SK-N-SH (cell line): ENCODE measurements at regions of chr3 and their contacts with region 1.

Region 1: GRCh38 chr3:172666873-172667694 is 43.8 kb downstream of the NCEH1 start:
- DNase-seq: peak; percentile 62
- H3K4me3 ChIP-seq: no peak overlapping the region
- H3K27ac ChIP-seq: no peak overlapping the region
- H3K4me1 ChIP-seq: no peaks in the 10 kb centered on the region
- H3K27me3 ChIP-seq: no peaks in the 10 kb centered on the region
- CTCF ChIP-seq: peak; percentile 82
- EP300 ChIP-seq: no peak
- RAD21 ChIP-seq: peak; percentile 93

Region 2: GRCh38 chr3:172501560-172501959 is 165.5 kb before region 1 on chr3:
- CTCF ChIA-PET with region 1: interaction called, 10 read pairs
- POLR2A ChIA-PET with region 1: no interaction called
- DNase-seq: no peak
- H3K4me3 ChIP-seq: no peak overlapping the region
- H3K27ac ChIP-seq: no peak overlapping the region
- H3K4me1 ChIP-seq: no peaks in the 10 kb centered on the region
- H3K27me3 ChIP-seq: no peaks in the 10 kb centered on the region
- CTCF ChIP-seq: no peak
- EP300 ChIP-seq: no peak
- RAD21 ChIP-seq: no peak

Region 3: DNA sequence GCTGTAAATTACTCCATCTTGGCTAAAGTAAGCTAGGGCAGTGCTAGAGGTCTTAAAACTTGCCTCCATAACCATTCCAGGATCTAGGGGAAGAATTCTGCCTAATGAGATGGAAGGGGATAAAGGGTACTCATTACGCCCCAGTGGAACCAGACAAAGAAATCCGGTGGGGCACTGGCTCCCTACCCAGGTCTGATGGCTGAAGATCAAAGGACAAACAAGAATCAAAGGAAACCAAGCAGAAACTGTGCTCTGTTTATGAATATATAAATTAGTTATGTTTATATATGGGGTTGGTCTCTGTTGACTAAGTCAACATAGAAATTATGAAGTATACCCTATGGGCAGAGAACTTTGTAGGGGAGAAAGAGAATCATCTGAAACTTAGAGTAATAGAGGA is 14.0 kb before region 1 on chr3:
- CTCF ChIA-PET with region 1: interaction called, 18 read pairs
- POLR2A ChIA-PET with region 1: no interaction called
- DNase-seq: no peak
- H3K4me3 ChIP-seq: no peak overlapping the region
- H3K27ac ChIP-seq: no peak overlapping the region
- H3K4me1 ChIP-seq: peaks cover 0 to under 1% of the 10 kb centered on the region in 2 experiments; a peak in 1 of 4 replicates
- H3K27me3 ChIP-seq: no peaks in the 10 kb centered on the region
- CTCF ChIP-seq: no peak
- EP300 ChIP-seq: no peak
- RAD21 ChIP-seq: no peak

Region 4: DNA sequence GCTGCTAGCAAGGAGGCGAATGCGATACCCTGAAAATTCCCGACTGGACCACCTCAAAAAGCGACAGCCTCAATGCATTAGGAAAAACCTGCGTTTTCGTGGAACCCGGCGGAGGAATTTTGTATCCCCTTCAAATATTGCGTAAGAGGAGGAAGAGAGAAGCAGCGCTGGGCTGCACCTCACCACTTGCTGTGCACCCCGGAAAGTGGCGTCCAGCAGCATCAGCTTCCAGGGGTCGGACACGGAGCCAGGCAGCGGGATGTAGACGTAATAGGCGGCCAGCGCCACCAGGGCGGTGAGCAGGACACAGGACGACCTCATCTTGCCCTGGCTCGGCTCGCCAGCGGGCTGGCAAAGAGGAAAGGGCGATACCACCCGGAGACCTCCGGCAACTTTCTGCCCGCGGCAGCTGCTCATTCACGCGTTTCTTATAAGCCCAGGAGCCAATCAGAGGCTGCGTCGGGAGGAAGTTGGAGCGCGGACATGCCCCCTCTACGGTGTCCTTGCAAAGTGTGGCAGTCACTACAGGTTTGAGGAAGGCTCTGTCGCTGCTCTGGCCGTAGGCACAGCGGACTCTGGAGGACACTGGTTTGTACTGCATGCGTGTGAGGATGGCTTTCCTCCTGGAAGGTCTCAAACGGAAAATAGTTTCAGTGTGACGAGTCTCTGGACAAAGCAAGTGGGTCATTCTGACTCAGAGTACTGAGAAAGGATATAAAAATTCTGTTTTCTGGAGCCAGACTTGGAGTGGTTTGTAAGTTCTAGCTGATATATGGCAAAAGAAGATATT is 43.8 kb after region 1 on chr3 and contains the start of gene NCEH1:
- CTCF ChIA-PET with region 1: interaction called, 14 read pairs
- POLR2A ChIA-PET with region 1: no interaction called
- DNase-seq: peak; percentile 85
- H3K4me3 ChIP-seq: peak within 1 kb of the TSS; percentile 91 to 93
- H3K27ac ChIP-seq: peak within 1 kb of the TSS; percentile 85 to 96
- H3K4me1 ChIP-seq: peaks cover 0 to 7% of the 10 kb centered on the region in 2 experiments; a peak in 2 of 4 replicates
- H3K27me3 ChIP-seq: no peaks in the 10 kb centered on the region
- CTCF ChIP-seq: peak; percentile 79
- EP300 ChIP-seq: peak in 1 of 2 experiments; percentile 50; a peak in 1 of 4 replicates
- RAD21 ChIP-seq: peak; percentile 75
- polyA plus RNA-seq, gene NCEH1: 7.5 and 12.2 TPM in 2 replicates